Activated CD4-positive, alpha-beta T cell treated with anti-CD3 and anti-CD28 coated beads, Interleukin-2, amount 10 ng/mL, durations not matched to agents 7 days and 5 days (primary cell): ENCODE measurements at regions of chr21 and their contacts with region 1.

Region 1: GRCh38 chr21:42376338-42376982 is 10.1 kb upstream of the TFF1 start:
- DNase-seq: no peak
- H3K4me3 Mint-ChIP-seq: no peak overlapping the region
- H3K27ac Mint-ChIP-seq: no peak overlapping the region
- H3K4me1 Mint-ChIP-seq: peaks cover 18% of the 10 kb centered on the region
- H3K27me3 Mint-ChIP-seq: no peaks in the 10 kb centered on the region

Region 2: GRCh38 chr21:42360317-42360716 is 16.1 kb before region 1 on chr21:
- CTCF ChIA-PET with region 1: interaction called, 22 read pairs
- POLR2A ChIA-PET with region 1: no interaction called
- DNase-seq: peak; percentile 18
- H3K4me3 Mint-ChIP-seq: no peak overlapping the region
- H3K27ac Mint-ChIP-seq: no peak overlapping the region
- H3K4me1 Mint-ChIP-seq: peaks cover 6% of the 10 kb centered on the region
- H3K27me3 Mint-ChIP-seq: peaks cover 6% of the 10 kb centered on the region